ENCODE measurements at regions of chr7 and their contacts with region 1.

Region 1: GRCh38 chr7:47254081-47255006 is 327.6 kb downstream of the TNS3 start:
- DNase-seq: peak in 7 of 9 experiments; percentile 22 to 58 (median 44)
- ATAC-seq: no peak
- H3K4me3 ChIP-seq: peak overlapping the region in 1 of 2 experiments; percentile 39
- H3K4me3 Mint-ChIP-seq: peak overlapping the region; percentile 66
- H3K27ac ChIP-seq: no peak overlapping the region
- H3K27ac Mint-ChIP-seq: no peak overlapping the region
- H3K4me1 ChIP-seq: peaks cover 8% of the 10 kb centered on the region
- H3K4me1 Mint-ChIP-seq: peaks cover 5% of the 10 kb centered on the region
- H3K27me3 ChIP-seq: peaks cover 0 to 2% of the 10 kb centered on the region in 2 experiments
- H3K27me3 Mint-ChIP-seq: peaks cover 19% of the 10 kb centered on the region
- CTCF ChIP-seq: peak; percentile 59

Region 2: GRCh38 chr7:45890902-45891461 is 1363.4 kb before region 1 on chr7:
- CTCF ChIA-PET with region 1: interaction called, 3 read pairs
- POLR2A ChIA-PET with region 1: no interaction called
- intact Hi-C with region 1: loop called in 1 of 2 experiments (anchors 10 kb)
- DNase-seq: peak in 2 of 9 experiments; percentile 27 to 33
- ATAC-seq: no peak
- H3K4me3 ChIP-seq: no peak overlapping the region
- H3K4me3 Mint-ChIP-seq: no peak overlapping the region
- H3K27ac ChIP-seq: no peak overlapping the region
- H3K27ac Mint-ChIP-seq: no peak overlapping the region
- H3K4me1 ChIP-seq: no peaks in the 10 kb centered on the region
- H3K4me1 Mint-ChIP-seq: peaks cover 3% of the 10 kb centered on the region
- H3K27me3 ChIP-seq: peaks cover 3 to 10% of the 10 kb centered on the region in 2 experiments
- H3K27me3 Mint-ChIP-seq: peaks cover 56% of the 10 kb centered on the region
- CTCF ChIP-seq: peak; percentile 63

Region 3: GRCh38 chr7:45923290-45923689 is 1331.1 kb before region 1 on chr7:
- CTCF ChIA-PET with region 1: no interaction called
- POLR2A ChIA-PET with region 1: no interaction called
- intact Hi-C with region 1: loop called in 1 of 2 experiments (anchors 10 kb)
- DNase-seq: peak in 7 of 9 experiments; percentile 31 to 69 (median 59)
- ATAC-seq: no peak
- H3K4me3 ChIP-seq: peak overlapping the region in 1 of 2 experiments; percentile 48
- H3K4me3 Mint-ChIP-seq: peak overlapping the region; percentile 43
- H3K27ac ChIP-seq: no peak overlapping the region
- H3K27ac Mint-ChIP-seq: no peak overlapping the region
- H3K4me1 ChIP-seq: peaks cover 37% of the 10 kb centered on the region
- H3K4me1 Mint-ChIP-seq: peaks cover 23% of the 10 kb centered on the region
- H3K27me3 ChIP-seq: peaks cover 0 to 5% of the 10 kb centered on the region in 2 experiments
- H3K27me3 Mint-ChIP-seq: peaks cover 48% of the 10 kb centered on the region
- CTCF ChIP-seq: peak; percentile 39